ENCODE measurements at regions of chr12 and their contacts with region 1.

Region 1: DNA sequence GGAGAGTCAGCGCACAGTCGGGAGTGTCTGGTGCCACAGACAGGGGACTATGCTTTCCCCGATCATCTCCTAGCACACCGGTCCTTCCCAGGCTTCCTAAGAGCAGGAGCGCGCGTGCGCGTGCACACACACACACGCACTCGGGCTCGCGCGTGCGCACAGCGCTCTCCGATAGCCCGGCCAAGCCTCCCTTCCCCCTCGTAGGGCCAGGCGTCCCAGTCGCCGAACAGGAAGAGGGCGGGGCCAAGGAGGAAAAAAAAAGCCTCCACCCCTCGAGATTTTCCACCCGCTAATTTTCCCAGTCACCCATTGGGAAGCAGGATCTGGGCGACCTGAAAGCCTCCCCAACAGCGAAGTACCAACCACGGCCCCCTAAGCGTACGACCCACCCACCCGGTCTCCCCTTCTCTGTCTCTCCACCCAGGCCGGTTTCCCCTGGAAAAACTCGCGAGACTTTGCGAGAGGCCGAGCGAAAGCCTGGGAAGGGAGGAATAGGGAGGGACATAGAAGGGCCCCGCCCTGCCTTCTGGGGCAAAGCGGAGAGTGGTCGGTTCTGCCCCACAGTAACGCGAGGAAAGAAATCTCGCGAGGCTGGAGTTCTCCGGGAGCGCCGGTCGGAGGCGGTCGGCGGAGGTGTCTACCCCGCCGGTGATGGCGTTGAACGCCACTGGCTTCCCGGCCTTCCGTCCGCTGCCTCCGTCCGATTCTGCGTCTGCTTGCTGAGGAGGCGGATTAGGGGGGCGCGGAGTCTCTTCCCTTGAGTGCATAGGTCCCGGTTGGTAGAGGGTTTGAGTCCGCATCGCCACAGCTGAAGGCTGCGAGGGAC is at the starts of genes FGFR1OP2 and INTS13:
- DNase-seq: peak; percentile 99 to 100
- H3K4me3 ChIP-seq: peak within 1 kb of the TSS; percentile 69 to 93
- H3K27ac ChIP-seq: peak within 1 kb of the TSS; percentile 92 to 97
- H3K4me1 ChIP-seq: peaks cover 0 to 51% (median 17%) of the 10 kb centered on the region in 4 donors
- H3K27me3 ChIP-seq: no peaks in the 10 kb centered on the region
- CTCF ChIP-seq: no peak

Region 2: DNA sequence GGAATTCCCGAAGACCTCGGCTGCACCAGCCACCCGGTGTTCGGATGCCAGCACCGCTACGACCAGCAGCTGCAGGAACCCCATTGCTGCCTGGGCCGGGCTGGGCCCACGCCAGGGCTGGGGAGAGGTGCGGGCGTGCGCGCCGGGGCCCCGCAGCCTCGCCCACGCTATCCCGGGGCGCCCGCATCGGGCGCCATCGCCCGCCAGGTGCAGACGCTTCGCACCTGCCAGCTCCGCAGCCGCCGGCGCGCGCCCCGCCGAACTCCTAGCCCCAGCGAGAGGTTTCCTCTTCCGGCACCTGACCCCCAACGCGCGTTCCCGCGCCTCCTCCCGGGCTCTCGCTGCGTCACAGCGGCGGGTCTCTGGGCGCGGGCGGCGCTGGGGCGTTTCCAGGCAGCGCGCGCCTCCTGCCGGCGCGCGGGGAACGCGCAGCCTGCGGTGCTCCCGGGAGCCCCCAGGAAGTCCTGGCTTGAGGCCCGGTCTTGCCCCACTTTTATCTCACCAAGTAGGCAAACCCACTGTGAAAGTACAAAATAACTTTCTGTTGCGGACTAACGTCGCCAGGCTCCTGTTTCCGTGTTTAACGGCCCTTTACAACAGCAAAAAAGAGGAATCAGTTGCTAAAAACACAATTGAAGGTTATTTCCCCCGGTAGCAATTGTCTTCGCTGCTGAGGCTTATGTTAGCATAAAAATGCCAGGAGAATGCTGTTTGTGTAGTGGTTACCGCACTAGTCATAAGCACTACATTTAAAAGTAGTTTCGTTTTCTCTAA is 76.2 kb after region 1 on chr12 and contains the start of gene TM7SF3:
- intact Hi-C with region 1: loop called (anchors 2 kb)
- DNase-seq: peak; percentile 94 to 95
- H3K4me3 ChIP-seq: peak within 1 kb of the TSS; percentile 81 to 88
- H3K27ac ChIP-seq: peak within 1 kb of the TSS; percentile 86 to 90
- H3K4me1 ChIP-seq: peaks cover 4 to 54% (median 31%) of the 10 kb centered on the region in 4 donors
- H3K27me3 ChIP-seq: no peaks in the 10 kb centered on the region
- CTCF ChIP-seq: peak; percentile 96 to 97

Region 3: DNA sequence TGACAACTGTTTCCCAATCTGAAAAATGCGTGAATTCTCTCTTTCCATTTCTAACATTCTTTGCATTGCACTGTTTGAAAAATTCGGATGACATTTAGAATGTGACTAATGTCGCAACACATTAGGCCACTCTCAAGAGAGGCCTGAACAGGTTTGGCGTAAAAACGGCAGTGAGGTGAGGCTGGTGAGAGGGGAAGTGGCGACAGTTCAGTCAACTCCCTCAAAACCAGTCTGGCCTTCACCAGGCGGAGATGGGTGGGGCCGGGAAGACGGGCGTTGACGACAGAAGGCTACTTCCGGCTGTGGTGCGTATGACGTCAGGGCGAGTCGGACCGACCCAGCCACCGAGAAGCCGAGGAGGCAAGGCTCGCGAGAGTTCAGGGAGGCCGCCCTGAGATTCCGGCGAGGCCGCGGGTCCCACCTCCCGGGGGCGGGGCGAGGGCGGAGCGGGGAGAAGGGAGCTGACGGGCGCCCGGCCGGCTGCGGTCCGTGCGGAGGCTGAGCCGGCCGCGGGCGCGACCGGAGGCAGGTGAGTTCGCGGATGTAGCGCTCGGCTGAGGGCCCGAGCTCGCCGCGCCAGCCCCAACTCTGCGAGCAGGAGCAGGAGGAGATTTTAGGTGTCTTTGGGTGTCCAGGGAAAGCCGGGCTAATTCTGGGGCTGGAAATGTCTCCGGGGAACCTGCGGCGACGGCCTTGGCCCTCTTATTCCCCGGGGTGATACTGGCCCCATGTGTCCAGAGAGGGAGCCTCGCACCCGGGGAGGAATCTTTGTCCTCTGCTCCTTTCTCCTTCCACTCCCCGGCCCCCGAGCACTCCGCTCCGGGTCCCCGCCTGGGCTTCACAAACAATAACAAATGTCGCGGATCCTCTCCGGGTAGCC is 306.0 kb after region 1 on chr12 and contains the start of gene STK38L:
- intact Hi-C with region 1: loop called (anchors 2 kb)
- DNase-seq: peak; percentile 94 to 98
- H3K4me3 ChIP-seq: peak within 1 kb of the TSS; percentile 78 to 93
- H3K27ac ChIP-seq: peak within 1 kb of the TSS; percentile 93 to 96
- H3K4me1 ChIP-seq: peaks cover 0 to 25% (median 4%) of the 10 kb centered on the region in 4 donors
- H3K27me3 ChIP-seq: no peaks in the 10 kb centered on the region
- CTCF ChIP-seq: no peak

Region 4: GRCh38 chr12:27319409-27319808 is 381.3 kb after region 1 on chr12:
- intact Hi-C with region 1: loop called (anchors 10 kb)
- DNase-seq: no peak
- H3K4me3 ChIP-seq: no peak overlapping the region
- H3K27ac ChIP-seq: no peak overlapping the region
- H3K4me1 ChIP-seq: peaks cover 0 to 6% (median 0%) of the 10 kb centered on the region in 4 donors
- H3K27me3 ChIP-seq: no peaks in the 10 kb centered on the region
- CTCF ChIP-seq: no peak

Measured in tibial artery (tissue), 4 donors.